A549 (cell line): ENCODE measurements at regions of chr20 and their contacts with region 1.

Region 1: GRCh38 chr20:44217342-44218092 is 6.9 kb upstream of the OSER1 start:
- DNase-seq: peak; percentile 69 to 80
- ATAC-seq: peak; percentile 78 to 90
- H3K4me3 ChIP-seq: no peak overlapping the region
- H3K27ac ChIP-seq: no peak overlapping the region
- H3K4me1 ChIP-seq: no peaks in the 10 kb centered on the region; the same call in 2 of the 3 replicates
- CTCF ChIP-seq: peak; percentile 97
- EP300 ChIP-seq: no peak
- POLR2A ChIP-seq: no peak
- RAD21 ChIP-seq: peak; percentile 96 to 99

Region 2: DNA sequence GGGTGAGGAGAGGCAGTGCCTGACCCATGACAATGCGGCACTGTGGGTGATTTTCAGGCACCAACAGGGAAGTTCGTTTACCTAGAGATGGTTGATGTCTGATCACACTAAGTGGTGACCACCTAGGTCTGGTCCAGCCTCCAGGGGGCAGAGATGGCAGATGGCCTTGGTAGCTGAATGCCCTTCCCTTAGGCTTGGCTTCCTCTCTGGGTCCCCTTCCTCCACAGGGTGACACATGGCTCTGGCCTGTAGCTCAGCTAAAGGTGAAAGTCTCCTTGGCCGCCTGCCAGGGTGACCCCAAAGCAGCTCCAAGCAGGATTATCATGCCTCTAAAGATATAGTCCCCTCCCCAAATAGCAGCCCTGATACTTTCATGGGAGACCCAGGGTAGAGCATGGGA is 36.0 kb after region 1 on chr20:
- CTCF ChIA-PET with region 1: interaction called, 19 read pairs
- POLR2A ChIA-PET with region 1: no interaction called
- DNase-seq: peak in 1 of 2 experiments; percentile 23
- ATAC-seq: peak in 1 of 2 experiments; percentile 62; a peak in 3 of 6 replicates
- H3K4me3 ChIP-seq: no peak overlapping the region
- H3K27ac ChIP-seq: no peak overlapping the region
- H3K4me1 ChIP-seq: no peaks in the 10 kb centered on the region
- CTCF ChIP-seq: no peak
- EP300 ChIP-seq: no peak
- POLR2A ChIP-seq: no peak
- RAD21 ChIP-seq: no peak

Region 3: DNA sequence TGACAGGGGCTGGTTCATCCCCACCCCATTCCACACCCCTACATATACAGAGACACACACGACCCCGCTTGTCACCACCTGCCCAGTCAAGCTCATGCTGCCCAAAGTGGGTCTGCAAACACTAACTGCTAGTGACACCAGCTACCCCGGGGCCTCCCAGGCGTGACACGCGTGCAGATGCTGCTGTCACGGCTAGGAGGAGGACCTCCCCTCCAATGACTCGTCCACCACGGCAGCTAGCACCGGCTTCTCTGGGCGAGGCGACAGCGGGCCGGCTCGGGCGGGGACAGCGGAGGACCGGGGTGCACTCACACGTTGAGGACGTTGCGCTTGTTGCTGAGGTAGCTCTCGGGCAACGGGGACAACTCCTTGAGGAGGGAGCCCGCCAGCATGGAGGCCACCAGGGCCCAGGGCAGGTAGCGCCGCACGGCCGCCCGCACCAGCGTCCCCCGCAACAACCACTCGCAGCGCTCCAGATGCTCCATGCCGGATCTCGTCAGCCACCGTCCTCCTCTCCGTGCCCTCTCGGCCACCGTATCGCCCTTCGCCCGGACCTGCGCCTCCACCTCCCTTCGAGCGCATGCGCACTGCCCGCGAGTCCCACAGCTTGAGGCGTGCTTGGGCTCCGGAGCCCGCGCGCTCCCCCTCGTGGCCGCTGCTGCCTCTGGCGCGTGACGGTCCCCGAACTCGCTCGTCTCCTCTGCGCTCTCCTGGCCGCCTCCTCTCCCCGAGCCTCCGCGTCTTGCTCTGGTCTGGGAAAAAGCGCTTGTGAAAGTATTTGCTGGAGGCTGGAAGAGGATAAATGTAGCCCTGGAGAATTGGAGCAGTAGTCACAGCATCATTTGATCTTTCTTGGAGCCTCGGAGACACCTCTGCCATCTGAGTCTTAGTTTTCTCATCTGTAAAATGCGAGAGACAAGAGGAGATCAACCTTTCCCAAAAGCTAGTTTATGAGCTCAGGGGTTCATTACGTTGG is 93.4 kb after region 1 on chr20 and contains the start of gene FITM2:
- CTCF ChIA-PET with region 1: interaction called, 337 read pairs
- POLR2A ChIA-PET with region 1: interaction called, 5 read pairs
- DNase-seq: peak; percentile 96 to 98
- ATAC-seq: peak; percentile 95 to 98
- H3K4me3 ChIP-seq: peak within 1 kb of the TSS; percentile 89
- H3K27ac ChIP-seq: peak within 1 kb of the TSS; percentile 92 to 95
- H3K4me1 ChIP-seq: peaks cover 7% of the 10 kb centered on the region; the same call in 2 of the 3 replicates
- CTCF ChIP-seq: peak; percentile 89
- EP300 ChIP-seq: no peak
- POLR2A ChIP-seq: peak; percentile 88
- RAD21 ChIP-seq: peak; percentile 79 to 88
- polyA plus RNA-seq, gene FITM2: 13.1 and 15.2 TPM in 2 replicates

Region 4: GRCh38 chr20:44345147-44345546 is 127.6 kb after region 1 on chr20:
- CTCF ChIA-PET with region 1: interaction called, 14 read pairs
- POLR2A ChIA-PET with region 1: no interaction called
- DNase-seq: no peak
- ATAC-seq: no peak
- H3K4me3 ChIP-seq: no peak overlapping the region
- H3K27ac ChIP-seq: no peak overlapping the region
- H3K4me1 ChIP-seq: no peaks in the 10 kb centered on the region
- CTCF ChIP-seq: no peak
- EP300 ChIP-seq: no peak
- POLR2A ChIP-seq: no peak
- RAD21 ChIP-seq: no peak

Region 5: GRCh38 chr20:44407402-44408184 is 190.1 kb after region 1 on chr20:
- CTCF ChIA-PET with region 1: interaction called, 16 read pairs
- POLR2A ChIA-PET with region 1: no interaction called
- DNase-seq: peak; percentile 66 to 80
- ATAC-seq: peak; percentile 62 to 81
- H3K4me3 ChIP-seq: no peak overlapping the region
- H3K27ac ChIP-seq: peak overlapping the region; percentile 48 to 76; a peak in 5 of 6 replicates
- H3K4me1 ChIP-seq: peaks cover 31% of the 10 kb centered on the region
- CTCF ChIP-seq: no peak
- EP300 ChIP-seq: no peak
- POLR2A ChIP-seq: no peak
- RAD21 ChIP-seq: no peak

Region 6: DNA sequence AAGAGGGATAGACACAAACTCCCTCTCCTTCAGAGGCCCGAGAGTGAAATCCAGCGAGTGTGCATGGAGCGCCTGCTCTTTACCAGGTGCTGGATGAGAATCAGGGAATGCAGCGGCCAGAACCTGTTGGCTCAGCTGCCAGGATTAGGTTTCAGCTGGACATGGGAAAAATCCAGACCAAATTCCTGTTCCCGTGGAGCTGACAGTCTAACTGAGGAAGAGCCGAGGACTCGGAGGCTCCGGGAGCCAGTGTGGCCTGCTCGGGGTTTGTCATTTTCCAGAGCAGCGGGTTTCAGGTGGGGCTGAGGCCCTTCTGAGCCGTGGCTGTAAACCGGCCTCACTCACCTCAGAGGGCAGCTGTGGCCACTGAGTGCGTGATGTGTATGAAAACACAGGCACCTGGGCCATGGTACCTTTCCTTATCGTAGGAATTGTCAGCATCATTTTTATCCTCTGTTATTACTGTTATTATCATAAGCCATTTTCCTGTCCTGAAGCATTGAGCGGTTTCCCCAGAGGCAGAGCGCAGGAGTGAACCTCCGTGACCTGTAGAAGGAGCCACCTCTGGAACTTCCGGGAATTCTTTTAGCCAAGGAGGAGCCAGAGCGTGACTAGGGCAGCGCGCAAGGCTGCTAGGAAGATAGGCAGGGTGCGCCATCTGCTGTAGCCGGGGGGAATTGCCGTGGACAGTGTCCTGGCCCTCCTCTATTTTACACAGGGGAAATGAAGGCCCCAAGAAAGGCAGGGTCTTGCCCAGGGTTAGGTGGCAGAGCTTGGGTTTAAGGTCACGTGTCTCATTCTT is 392.2 kb after region 1 on chr20:
- CTCF ChIA-PET with region 1: interaction called, 54 read pairs
- POLR2A ChIA-PET with region 1: no interaction called
- DNase-seq: peak; percentile 91 to 95
- ATAC-seq: peak; percentile 98 to 99
- H3K4me3 ChIP-seq: peak overlapping the region; percentile 29; the same call in 1 of the 3 replicates
- H3K27ac ChIP-seq: peak overlapping the region; percentile 76 to 85
- H3K4me1 ChIP-seq: peaks cover 11% of the 10 kb centered on the region
- CTCF ChIP-seq: peak; percentile 89
- EP300 ChIP-seq: no peak
- POLR2A ChIP-seq: peak; percentile 39; the same call in 1 of the 2 replicates
- RAD21 ChIP-seq: peak; percentile 96 to 98